Activated CD8-positive, alpha-beta T cell treated with anti-CD3 and anti-CD28 coated beads for 36 hours (primary cell): ENCODE measurements at regions of chr17 and their contacts with region 1.

Region 1: DNA sequence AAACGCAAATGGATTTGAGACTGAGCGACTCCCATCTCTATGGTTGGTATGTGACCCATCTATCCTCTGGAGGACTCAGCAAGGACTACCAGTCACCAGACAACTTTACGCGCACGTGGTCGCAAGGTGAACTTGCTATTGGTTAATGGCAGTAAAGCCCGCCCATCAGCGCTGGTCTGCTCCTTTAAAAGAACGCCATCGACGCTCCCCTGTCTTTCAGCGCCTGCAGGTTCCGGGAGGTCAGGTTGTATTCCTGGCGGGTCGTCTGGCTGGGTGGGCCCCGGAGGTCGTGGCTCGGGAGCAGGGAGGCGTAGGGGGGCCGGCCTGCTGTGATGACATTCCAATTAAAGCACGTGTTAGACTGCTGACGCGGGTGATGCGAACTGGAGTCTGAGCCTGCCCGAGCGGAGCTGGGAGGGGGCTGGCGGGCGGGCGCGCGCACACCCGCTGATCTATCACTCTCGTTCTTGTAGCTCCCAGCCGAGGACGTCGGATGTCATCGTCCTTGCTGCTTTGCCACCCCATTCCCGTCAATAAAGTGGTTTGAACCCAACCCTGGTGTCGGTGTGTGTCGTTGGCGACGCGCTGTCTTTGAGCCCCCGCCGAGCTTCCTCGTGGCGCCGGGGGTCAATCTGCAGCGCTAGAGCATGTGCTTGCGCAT is 15.9 kb upstream of the ERN1 start:
- DNase-seq: peak; percentile 98
- ATAC-seq: peak; percentile 96
- H3K4me3 Mint-ChIP-seq: no peak overlapping the region
- H3K27ac Mint-ChIP-seq: no peak overlapping the region
- H3K4me1 Mint-ChIP-seq: peaks cover 18% of the 10 kb centered on the region
- H3K27me3 Mint-ChIP-seq: no peaks in the 10 kb centered on the region
- CTCF ChIP-seq: no peak

Region 2: GRCh38 chr17:64051153-64051552 is 94.7 kb before region 1 on chr17:
- CTCF ChIA-PET with region 1: no interaction called
- POLR2A ChIA-PET with region 1: interaction called, 18 read pairs
- intact Hi-C with region 1: no loop called
- DNase-seq: no peak
- ATAC-seq: peak; percentile 95
- H3K4me3 Mint-ChIP-seq: no peak overlapping the region
- H3K27ac Mint-ChIP-seq: peak overlapping the region; percentile 81
- H3K4me1 Mint-ChIP-seq: peaks cover 29% of the 10 kb centered on the region
- H3K27me3 Mint-ChIP-seq: no peaks in the 10 kb centered on the region
- CTCF ChIP-seq: no peak

Region 3: GRCh38 chr17:64135000-64135399 is 10.9 kb before region 1 on chr17:
- CTCF ChIA-PET with region 1: interaction called, 50 read pairs
- POLR2A ChIA-PET with region 1: interaction called, 83 read pairs
- intact Hi-C with region 1: no loop called
- DNase-seq: no peak
- ATAC-seq: no peak
- H3K4me3 Mint-ChIP-seq: no peak overlapping the region
- H3K27ac Mint-ChIP-seq: no peak overlapping the region
- H3K4me1 Mint-ChIP-seq: peaks cover 21% of the 10 kb centered on the region
- H3K27me3 Mint-ChIP-seq: no peaks in the 10 kb centered on the region
- CTCF ChIP-seq: no peak

Region 4: DNA sequence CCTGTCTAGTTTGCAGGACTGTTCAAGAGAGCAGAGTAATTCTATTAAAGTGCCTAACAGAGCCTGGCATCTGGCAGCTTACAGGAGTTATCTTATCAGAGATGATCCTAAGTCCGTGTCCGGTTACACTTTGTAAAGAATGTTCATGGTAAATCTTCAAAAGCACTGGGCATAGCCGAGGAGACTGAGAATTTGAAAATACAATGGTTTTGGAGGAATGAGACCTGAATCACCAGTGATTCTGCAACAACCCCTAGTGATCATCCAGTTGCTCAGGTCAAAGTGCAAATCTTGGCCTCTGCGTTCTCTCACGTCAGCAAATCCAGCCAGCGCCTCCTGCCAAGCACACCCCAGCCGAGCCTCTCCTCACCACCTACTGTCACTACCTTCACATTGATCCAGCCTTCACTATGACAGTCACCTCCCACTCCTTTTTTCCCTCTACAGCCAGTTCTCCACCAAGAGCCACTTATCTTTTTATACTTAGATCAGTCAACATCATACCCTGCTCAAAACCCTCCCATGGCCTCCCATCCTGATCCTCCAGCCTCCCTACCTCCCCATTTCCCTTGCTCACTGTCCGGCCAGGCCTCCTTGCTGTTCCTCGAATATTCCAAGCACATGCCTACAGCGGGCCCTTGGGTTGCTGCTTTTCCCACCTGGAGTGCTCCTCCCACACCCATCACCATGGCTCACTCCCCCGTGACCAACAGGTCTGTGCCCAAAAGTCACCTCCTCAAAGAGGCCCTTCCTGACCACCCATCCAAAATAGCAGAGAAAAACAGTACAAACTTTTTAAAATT is 41.4 kb after region 1 on chr17:
- CTCF ChIA-PET with region 1: no interaction called
- POLR2A ChIA-PET with region 1: no interaction called
- intact Hi-C with region 1: no loop called
- DNase-seq: no peak
- ATAC-seq: no peak
- H3K4me3 Mint-ChIP-seq: no peak overlapping the region
- H3K27ac Mint-ChIP-seq: no peak overlapping the region
- H3K4me1 Mint-ChIP-seq: peaks cover 10% of the 10 kb centered on the region
- H3K27me3 Mint-ChIP-seq: no peaks in the 10 kb centered on the region
- CTCF ChIP-seq: no peak

Region 5: GRCh38 chr17:64240741-64241347 is 95.0 kb after region 1 on chr17:
- CTCF ChIA-PET with region 1: interaction called, 6 read pairs
- POLR2A ChIA-PET with region 1: interaction called, 19 read pairs
- intact Hi-C with region 1: no loop called
- DNase-seq: no peak
- ATAC-seq: no peak
- H3K4me3 Mint-ChIP-seq: no peak overlapping the region
- H3K27ac Mint-ChIP-seq: no peak overlapping the region
- H3K4me1 Mint-ChIP-seq: peaks cover 44% of the 10 kb centered on the region
- H3K27me3 Mint-ChIP-seq: no peaks in the 10 kb centered on the region
- CTCF ChIP-seq: no peak

Region 6: GRCh38 chr17:64270885-64271284 is 125.0 kb after region 1 on chr17:
- CTCF ChIA-PET with region 1: interaction called, 7 read pairs
- POLR2A ChIA-PET with region 1: interaction called, 23 read pairs
- intact Hi-C with region 1: no loop called
- DNase-seq: peak; percentile 10
- ATAC-seq: peak; percentile 55
- H3K4me3 Mint-ChIP-seq: peak overlapping the region; percentile 28
- H3K27ac Mint-ChIP-seq: peak overlapping the region; percentile 68
- H3K4me1 Mint-ChIP-seq: peaks cover 21% of the 10 kb centered on the region
- H3K27me3 Mint-ChIP-seq: peaks cover 3% of the 10 kb centered on the region
- CTCF ChIP-seq: no peak

Region 7: DNA sequence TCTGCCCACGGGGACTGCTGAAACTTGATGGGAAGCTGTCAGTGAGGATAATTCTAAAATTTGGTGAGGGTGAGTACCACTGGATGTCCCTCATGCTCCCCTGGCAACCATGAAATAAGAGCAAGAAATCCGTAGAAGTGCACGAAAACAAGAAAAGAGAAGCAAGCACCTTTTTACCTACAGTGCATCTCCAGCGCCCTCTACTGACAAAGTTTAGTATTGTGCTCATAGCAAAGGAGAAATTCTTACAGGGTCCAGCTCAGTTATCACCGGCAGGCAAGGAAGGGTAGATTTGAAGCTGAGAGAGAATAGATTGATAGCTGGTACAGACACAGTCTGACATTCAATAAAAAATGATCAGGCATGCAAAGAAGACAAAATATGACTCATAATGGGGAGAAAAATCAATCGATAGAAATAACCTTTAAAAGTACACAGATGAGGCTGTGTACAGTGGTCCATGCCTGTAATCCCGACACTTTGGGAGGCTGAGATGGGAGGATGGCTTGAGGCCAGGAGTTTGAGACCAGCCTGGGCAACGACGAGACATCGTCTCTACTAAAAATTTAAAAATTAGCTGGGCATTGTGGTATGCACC is 145.5 kb after region 1 on chr17:
- CTCF ChIA-PET with region 1: interaction called, 15 read pairs
- POLR2A ChIA-PET with region 1: interaction called, 11 read pairs
- intact Hi-C with region 1: no loop called
- DNase-seq: peak; percentile 17
- ATAC-seq: no peak
- H3K4me3 Mint-ChIP-seq: no peak overlapping the region
- H3K27ac Mint-ChIP-seq: no peak overlapping the region
- H3K4me1 Mint-ChIP-seq: no peaks in the 10 kb centered on the region
- H3K27me3 Mint-ChIP-seq: no peaks in the 10 kb centered on the region
- CTCF ChIP-seq: peak; percentile 74